ENCODE measurements at regions of chr3 and their contacts with region 1.

Region 1: DNA sequence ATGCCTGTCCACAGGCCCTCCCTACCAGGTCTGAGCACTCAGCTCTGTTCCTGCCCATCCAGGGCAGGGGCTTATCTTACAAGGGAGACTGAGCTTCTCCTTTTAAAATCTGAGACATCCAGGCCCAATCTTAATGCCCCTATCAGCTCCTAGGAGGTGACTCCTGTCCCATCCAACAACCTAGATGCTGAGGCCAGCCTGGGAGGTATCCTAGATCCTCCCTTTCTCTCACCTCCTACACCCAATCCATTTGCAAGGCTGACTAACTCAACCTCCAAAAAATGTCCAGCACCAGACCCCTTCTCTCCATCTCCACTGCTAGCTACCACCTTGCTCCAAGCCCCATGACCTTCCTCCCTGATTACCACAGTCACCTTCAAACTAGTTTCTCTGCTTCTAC is 17.4 kb downstream of the LHFPL4 start:
- DNase-seq: no peak
- H3K4me3 ChIP-seq: no peak overlapping the region
- H3K27ac ChIP-seq: no peak overlapping the region
- H3K27me3 ChIP-seq: no peaks in the 10 kb centered on the region
- CTCF ChIP-seq: no peak

Region 2: DNA sequence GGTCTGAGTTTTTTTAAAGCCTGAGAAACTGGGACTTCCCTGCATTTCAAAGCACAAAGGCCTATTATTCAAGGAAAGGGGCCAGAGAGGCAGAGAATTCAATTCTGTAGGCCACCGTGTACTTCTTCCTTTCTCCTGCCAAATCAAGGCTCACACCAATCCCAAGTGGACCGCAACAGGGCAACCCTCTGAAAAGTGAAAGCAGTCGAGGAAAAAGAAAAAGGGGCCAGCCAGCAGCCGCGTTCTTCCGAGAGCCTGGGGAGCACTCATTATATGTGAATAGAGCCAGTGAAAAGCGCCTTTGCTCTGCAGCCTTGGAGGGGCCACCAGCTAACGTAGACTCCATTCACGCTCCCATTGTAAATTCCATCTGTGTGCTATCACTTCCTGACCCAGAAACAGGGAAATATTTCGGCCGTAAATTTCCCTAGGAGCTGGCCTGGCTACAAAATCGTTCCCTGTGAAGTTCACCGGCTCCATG is 219.3 kb before region 1 on chr3:
- intact Hi-C with region 1: no loop called
- DNase-seq: peak in 5 of 10 donors; percentile 16 to 52 (median 33)
- H3K4me3 ChIP-seq: peak overlapping the region in 49 of 59 donors; percentile 3 to 53 (median 32)
- H3K27ac ChIP-seq: peak overlapping the region in 52 of 59 donors; percentile 2 to 81 (median 49)
- H3K27me3 ChIP-seq: no peaks in the 10 kb centered on the region
- CTCF ChIP-seq: no peak

Region 3: DNA sequence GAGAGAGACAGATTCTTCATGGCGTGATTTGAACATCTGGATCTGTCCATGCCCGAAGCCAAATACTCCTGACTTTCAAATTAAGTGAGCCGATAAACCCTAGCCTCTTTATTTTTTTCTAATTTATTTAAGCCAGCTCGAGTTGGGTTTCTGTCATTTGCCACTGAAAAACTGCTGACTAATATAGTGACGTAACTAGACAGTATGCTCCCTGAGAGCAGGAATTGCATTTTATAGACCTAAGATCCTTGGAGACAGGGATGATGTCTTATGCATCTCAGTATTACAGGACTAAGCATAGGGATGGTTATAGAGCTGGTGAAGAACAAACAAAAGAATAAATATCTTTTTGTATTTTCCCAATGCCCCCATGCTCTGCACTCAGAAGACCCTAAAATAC is 12.8 kb after region 1 on chr3:
- intact Hi-C with region 1: loop called in 1 of 2 experiments (anchors 1 kb)
- DNase-seq: no peak
- H3K4me3 ChIP-seq: no peak overlapping the region
- H3K27ac ChIP-seq: no peak overlapping the region
- H3K27me3 ChIP-seq: peaks cover 0 to 37% (median 2%) of the 10 kb centered on the region in 45 donors
- CTCF ChIP-seq: no peak

Region 4: DNA sequence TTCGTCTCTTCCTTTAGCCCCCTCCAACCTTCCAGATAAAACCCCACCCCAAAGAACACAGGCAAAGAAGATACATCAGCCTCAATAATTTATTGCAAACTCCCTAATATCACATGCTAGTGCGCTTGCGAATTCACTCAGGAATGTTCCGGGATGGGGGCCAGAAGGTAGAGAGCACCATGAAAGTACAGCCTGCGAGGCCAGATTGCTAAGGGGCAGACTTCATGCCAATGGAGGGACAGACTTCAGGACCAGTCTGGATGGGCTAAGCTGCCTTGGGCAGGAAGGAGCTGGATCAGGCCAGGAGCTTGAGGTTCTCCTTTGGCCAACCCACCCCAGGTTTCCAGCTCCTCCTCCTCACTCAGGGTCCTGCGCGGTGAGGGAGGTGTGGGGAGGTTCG is 330.4 kb after region 1 on chr3:
- intact Hi-C with region 1: no loop called
- DNase-seq: no peak
- H3K4me3 ChIP-seq: no peak overlapping the region
- H3K27ac ChIP-seq: no peak overlapping the region
- H3K27me3 ChIP-seq: no peaks in the 10 kb centered on the region
- CTCF ChIP-seq: no peak